Heart right ventricle (tissue), 16 donors: ENCODE measurements at regions of chr19 and their contacts with region 1.

Region 1: GRCh38 chr19:33186431-33187182 is 7.5 kb upstream of the LRP3 start:
- DNase-seq: no peak
- ATAC-seq: no peak
- H3K4me3 ChIP-seq: no peak overlapping the region
- H3K27ac ChIP-seq: no peak overlapping the region
- H3K4me1 ChIP-seq: peaks cover 0 to 23% (median 3%) of the 10 kb centered on the region in 9 donors
- H3K27me3 ChIP-seq: no peaks in the 10 kb centered on the region
- CTCF ChIP-seq: no peak

Region 2: GRCh38 chr19:33125929-33126388 is 60.6 kb before region 1 on chr19:
- intact Hi-C with region 1: loop called in 2 of 10 experiments (anchors 5 to 10 kb)
- DNase-seq: peak in 1 of 2 donors; percentile 32
- ATAC-seq: peak in 6 of 8 donors; percentile 75 to 87 (median 81)
- H3K4me3 ChIP-seq: no peak overlapping the region
- H3K27ac ChIP-seq: no peak overlapping the region
- H3K4me1 ChIP-seq: peaks cover 0 to 7% (median 0%) of the 10 kb centered on the region in 9 donors
- H3K27me3 ChIP-seq: no peaks in the 10 kb centered on the region
- CTCF ChIP-seq: peak; percentile 75 to 89 (median 83)

Region 3: GRCh38 chr19:33143897-33144405 is 42.7 kb before region 1 on chr19:
- intact Hi-C with region 1: loop called in 6 of 10 experiments (anchors 1 to 5 kb)
- DNase-seq: peak; percentile 53 to 57
- ATAC-seq: peak; percentile 91 to 98 (median 96)
- H3K4me3 ChIP-seq: peak overlapping the region in 1 of 10 donors; percentile 9
- H3K27ac ChIP-seq: no peak overlapping the region
- H3K4me1 ChIP-seq: peaks cover 0 to 7% (median 0%) of the 10 kb centered on the region in 9 donors
- H3K27me3 ChIP-seq: peaks cover 0 to 18% (median 4%) of the 10 kb centered on the region in 7 donors
- CTCF ChIP-seq: peak; percentile 77 to 95 (median 94)

Region 4: GRCh38 chr19:33157906-33158305 is 28.7 kb before region 1 on chr19:
- intact Hi-C with region 1: no loop called
- DNase-seq: no peak
- ATAC-seq: no peak
- H3K4me3 ChIP-seq: no peak overlapping the region
- H3K27ac ChIP-seq: no peak overlapping the region
- H3K4me1 ChIP-seq: peaks cover 0 to 34% (median 0%) of the 10 kb centered on the region in 9 donors
- H3K27me3 ChIP-seq: no peaks in the 10 kb centered on the region
- CTCF ChIP-seq: no peak

Region 5: DNA sequence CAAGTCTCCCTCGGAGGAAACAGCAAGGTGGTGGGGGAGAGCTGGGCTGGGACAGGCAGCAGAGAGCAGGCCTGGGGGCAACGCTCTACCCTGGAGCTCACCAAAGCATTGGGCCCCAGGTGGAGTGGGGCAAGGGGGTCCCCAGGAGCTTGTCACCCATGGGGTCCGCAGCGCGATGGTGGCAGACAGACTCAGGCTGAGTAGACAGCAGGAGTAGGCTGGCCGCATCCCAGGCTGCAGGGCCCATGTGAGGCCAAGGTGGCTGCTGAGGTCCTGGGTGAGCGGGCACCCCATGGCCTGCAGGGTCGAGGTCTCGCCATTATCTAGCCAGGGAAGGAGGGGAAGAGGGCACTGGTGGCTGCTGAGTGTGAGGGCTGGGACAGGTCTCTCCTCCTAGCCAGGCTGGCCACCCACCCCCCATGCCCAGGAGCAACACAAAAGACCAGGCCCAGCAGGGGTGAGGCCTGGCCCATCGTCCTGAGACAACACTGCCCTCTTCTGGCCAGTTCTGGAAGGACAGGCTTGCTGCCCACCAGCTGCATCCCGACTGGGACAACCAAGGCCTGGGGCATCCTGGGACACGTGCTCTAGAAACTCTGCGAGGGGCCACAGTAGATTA is 220.0 kb after region 1 on chr19:
- intact Hi-C with region 1: no loop called
- DNase-seq: peak; percentile 60 to 71
- ATAC-seq: peak; percentile 59 to 83 (median 76)
- H3K4me3 ChIP-seq: no peak overlapping the region
- H3K27ac ChIP-seq: no peak overlapping the region
- H3K4me1 ChIP-seq: peaks cover 0 to 20% (median 0%) of the 10 kb centered on the region in 9 donors
- H3K27me3 ChIP-seq: no peaks in the 10 kb centered on the region
- CTCF ChIP-seq: peak; percentile 92 to 99 (median 96)